Esophagus muscularis mucosa (tissue), 4 donors: ENCODE measurements at regions of chr18 and their contacts with region 1.

Region 1: GRCh38 chr18:63994783-63995399 is 25.0 kb downstream of the SERPINB8 start:
- DNase-seq: no peak
- H3K4me3 ChIP-seq: no peak overlapping the region
- H3K27ac ChIP-seq: no peak overlapping the region
- H3K4me1 ChIP-seq: peaks cover 0 to 5% (median 2%) of the 10 kb centered on the region in 4 donors
- H3K27me3 ChIP-seq: peaks cover 0 to 4% (median 0%) of the 10 kb centered on the region in 4 donors
- CTCF ChIP-seq: peak; percentile 75 to 95 (median 87)
- EP300 ChIP-seq: no peak
- POLR2A ChIP-seq: no peak

Region 2: GRCh38 chr18:63859781-63860475 is 135.0 kb before region 1 on chr18:
- intact Hi-C with region 1: no loop called
- DNase-seq: no peak
- H3K4me3 ChIP-seq: no peak overlapping the region
- H3K27ac ChIP-seq: no peak overlapping the region
- H3K4me1 ChIP-seq: no peaks in the 10 kb centered on the region
- H3K27me3 ChIP-seq: peaks cover 0 to 5% (median 0%) of the 10 kb centered on the region in 4 donors
- CTCF ChIP-seq: no peak
- EP300 ChIP-seq: no peak
- POLR2A ChIP-seq: no peak

Region 3: DNA sequence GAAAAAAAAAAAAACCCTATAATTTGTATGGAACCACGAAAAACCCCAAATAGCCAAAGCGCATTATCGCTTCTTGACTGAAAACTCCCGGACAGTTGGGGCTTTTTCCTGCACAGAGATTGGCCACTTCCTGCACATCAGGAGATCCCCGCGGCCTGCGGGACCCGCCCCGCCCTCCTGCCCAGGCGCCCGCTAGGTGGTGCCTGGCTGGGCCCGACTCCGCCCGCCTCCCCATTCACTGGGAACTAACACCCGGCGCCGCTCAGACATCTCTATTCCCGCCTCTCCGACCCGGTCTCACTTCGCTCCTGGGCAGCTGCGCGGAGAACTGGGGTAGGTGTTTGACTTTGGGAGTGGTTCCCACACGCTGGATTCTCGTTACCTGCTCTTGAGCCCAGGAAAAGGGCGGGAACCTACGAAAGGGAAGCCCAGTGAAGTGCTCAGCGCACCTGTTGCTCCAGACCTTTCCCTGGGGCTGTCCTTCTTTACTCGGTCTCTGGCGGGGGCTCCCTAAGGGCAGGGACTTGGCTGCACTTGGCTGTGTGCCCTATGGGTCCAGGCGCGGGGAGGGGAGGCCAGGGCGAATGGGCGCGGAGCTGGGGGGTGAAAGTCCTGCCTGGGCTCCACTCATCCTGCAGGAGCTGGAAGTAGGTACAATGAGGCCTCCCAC is 45.7 kb before region 1 on chr18 and contains the start of gene HMSD:
- intact Hi-C with region 1: loop called (anchors 10 kb)
- DNase-seq: no peak
- H3K4me3 ChIP-seq: peak within 1 kb of the TSS; percentile 32 to 52 (median 42)
- H3K27ac ChIP-seq: no peak within 1 kb of the TSS
- H3K4me1 ChIP-seq: peaks cover 0 to 10% (median 9%) of the 10 kb centered on the region in 4 donors
- H3K27me3 ChIP-seq: peaks cover 0 to 47% (median 0%) of the 10 kb centered on the region in 4 donors
- CTCF ChIP-seq: peak in 1 of 3 experiments; percentile 41
- EP300 ChIP-seq: no peak
- POLR2A ChIP-seq: no peak
- total RNA-seq, gene HMSD: not detected

Region 4: GRCh38 chr18:63963615-63964256 is 31.2 kb before region 1 on chr18:
- intact Hi-C with region 1: loop called (anchors 2 kb)
- DNase-seq: no peak
- H3K4me3 ChIP-seq: no peak overlapping the region
- H3K27ac ChIP-seq: no peak overlapping the region
- H3K4me1 ChIP-seq: peaks cover 0 to 3% (median 0%) of the 10 kb centered on the region in 4 donors
- H3K27me3 ChIP-seq: peaks cover 0 to 12% (median 0%) of the 10 kb centered on the region in 4 donors
- CTCF ChIP-seq: peak; percentile 65 to 86 (median 72)
- EP300 ChIP-seq: no peak
- POLR2A ChIP-seq: no peak